Activated naive CD4-positive, alpha-beta T cell treated with anti-CD3 and anti-CD28 coated beads, Interleukin-2, amount 10 ng/mL, durations not matched to agents 7 days and 5 days (primary cell): ENCODE measurements at regions of chr1 and their contacts with region 1.

Region 1: DNA sequence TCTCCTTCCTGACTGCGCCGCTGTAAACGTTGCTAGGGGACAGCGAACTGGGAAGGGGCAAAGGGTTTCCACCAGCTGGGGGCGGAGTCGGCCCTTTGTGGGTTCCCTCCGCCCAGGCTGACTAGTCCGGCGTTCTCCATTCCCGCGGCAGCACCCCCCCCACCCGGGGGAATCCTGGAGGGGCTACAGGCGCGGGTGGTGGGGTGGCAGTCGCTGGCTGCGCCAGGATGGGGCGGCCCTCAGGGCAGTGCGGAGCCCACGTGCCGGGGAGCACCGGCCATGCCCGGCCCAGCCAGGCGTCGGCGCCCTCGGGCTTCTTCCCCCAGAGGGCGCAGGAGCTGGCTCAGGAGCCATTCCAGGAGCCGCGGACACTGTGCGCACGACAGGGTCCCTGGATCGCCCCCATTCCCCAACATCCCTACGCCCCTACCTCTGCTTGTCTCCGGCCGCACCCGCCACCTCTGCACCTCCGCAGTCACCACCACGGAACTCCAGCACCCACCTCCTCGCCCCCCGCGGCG is 476 bp downstream of the BATF3 start:
- DNase-seq: peak; percentile 66
- H3K4me3 Mint-ChIP-seq: peak overlapping the region; percentile 78
- H3K27ac Mint-ChIP-seq: no peak overlapping the region
- H3K4me1 Mint-ChIP-seq: peaks cover 32% of the 10 kb centered on the region
- H3K27me3 Mint-ChIP-seq: peaks cover 50% of the 10 kb centered on the region

Region 2: GRCh38 chr1:212514056-212514614 is 185.0 kb before region 1 on chr1:
- CTCF ChIA-PET with region 1: no interaction called
- DNase-seq: peak; percentile 40
- H3K4me3 Mint-ChIP-seq: no peak overlapping the region
- H3K27ac Mint-ChIP-seq: no peak overlapping the region
- H3K4me1 Mint-ChIP-seq: peaks cover 11% of the 10 kb centered on the region
- H3K27me3 Mint-ChIP-seq: peaks cover 87% of the 10 kb centered on the region

Region 3: DNA sequence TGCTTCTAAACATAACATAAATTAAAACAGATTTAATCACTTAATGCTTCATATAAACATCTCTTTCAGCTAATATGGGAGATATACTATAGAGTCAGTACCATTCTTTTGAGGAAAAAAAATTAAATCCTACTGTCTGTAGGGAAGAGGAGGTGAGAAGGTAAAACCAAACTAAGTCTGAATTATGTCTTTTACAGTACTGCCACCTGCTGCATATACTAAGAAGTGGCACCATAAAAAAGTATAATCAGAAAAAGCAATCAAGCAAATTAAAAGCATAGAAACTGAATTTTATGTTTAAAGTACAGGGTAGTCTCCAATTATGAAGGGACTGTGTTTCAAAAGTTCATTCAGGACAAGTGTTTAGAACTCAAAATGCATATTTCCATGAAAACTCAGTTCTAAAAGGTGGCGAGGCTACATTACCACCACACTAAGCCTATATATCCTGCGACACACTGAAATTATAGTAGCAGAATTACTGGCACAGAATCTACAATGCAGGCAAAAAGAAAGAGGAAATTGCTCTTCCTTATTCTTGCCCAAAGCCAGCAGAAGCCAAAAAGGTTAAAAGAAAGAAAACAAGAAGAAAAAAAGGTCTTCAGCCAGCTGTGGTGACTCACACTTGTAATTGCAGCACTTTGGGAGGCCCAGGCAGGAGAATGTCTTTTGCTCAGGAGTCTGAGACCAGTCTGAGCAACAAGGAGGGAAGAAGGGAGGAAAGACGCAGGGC is 83.4 kb after region 1 on chr1:
- CTCF ChIA-PET with region 1: interaction called, 19 read pairs
- DNase-seq: no peak
- H3K4me3 Mint-ChIP-seq: no peak overlapping the region
- H3K27ac Mint-ChIP-seq: no peak overlapping the region
- H3K4me1 Mint-ChIP-seq: no peaks in the 10 kb centered on the region
- H3K27me3 Mint-ChIP-seq: no peaks in the 10 kb centered on the region